ENCODE measurements at regions of chr12 and their contacts with region 1.

Region 1: GRCh38 chr12:102069707-102070106 is 7.9 kb upstream of the WASHC3 start:
- DNase-seq: no peak
- H3K4me3 ChIP-seq: no peak overlapping the region
- CTCF ChIP-seq: no peak
- POLR2A ChIP-seq: no peak

Region 2: GRCh38 chr12:102043928-102044327 is 25.8 kb before region 1 on chr12:
- intact Hi-C with region 1: loop called (anchors 1 kb)
- DNase-seq: no peak
- H3K4me3 ChIP-seq: no peak overlapping the region
- CTCF ChIP-seq: no peak
- POLR2A ChIP-seq: no peak